Aorta (tissue), 5 donors: ENCODE measurements at regions of chr7 and their contacts with region 1.

Region 1: DNA sequence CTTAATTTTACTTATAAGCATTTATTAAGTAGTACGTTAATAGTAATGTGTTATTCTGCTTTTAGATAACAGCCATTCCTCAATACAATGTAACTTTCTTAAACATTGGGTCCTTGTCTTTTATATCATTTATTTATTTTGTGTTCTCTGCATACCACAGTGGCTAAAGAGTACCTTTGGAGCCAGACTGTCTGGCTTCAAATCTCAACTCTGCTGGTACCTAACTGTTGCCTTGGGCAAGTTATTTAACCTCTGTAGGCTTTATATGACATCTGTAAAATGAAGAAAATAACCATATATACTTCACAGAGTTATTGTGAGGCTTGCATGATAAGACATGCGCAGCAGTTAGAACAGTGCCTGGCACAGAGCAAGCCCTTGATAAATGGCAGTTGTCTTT is 397.6 kb downstream of the MDFIC start:
- DNase-seq: no peak
- ATAC-seq: no peak
- H3K4me3 ChIP-seq: no peak overlapping the region
- H3K27ac ChIP-seq: no peak overlapping the region
- H3K4me1 ChIP-seq: no peaks in the 10 kb centered on the region
- H3K27me3 ChIP-seq: no peaks in the 10 kb centered on the region

Region 2: GRCh38 chr7:115229401-115230105 is 90.0 kb before region 1 on chr7:
- intact Hi-C with region 1: loop called in 1 of 2 experiments (anchors 10 kb)
- DNase-seq: no peak
- ATAC-seq: no peak
- H3K4me3 ChIP-seq: no peak overlapping the region
- H3K27ac ChIP-seq: no peak overlapping the region
- H3K4me1 ChIP-seq: no peaks in the 10 kb centered on the region
- H3K27me3 ChIP-seq: no peaks in the 10 kb centered on the region

Region 3: GRCh38 chr7:115267503-115267902 is 52.0 kb before region 1 on chr7:
- intact Hi-C with region 1: no loop called
- DNase-seq: no peak
- ATAC-seq: no peak
- H3K4me3 ChIP-seq: no peak overlapping the region
- H3K27ac ChIP-seq: no peak overlapping the region
- H3K4me1 ChIP-seq: peaks cover 0 to 3% of the 10 kb centered on the region in 2 donors
- H3K27me3 ChIP-seq: no peaks in the 10 kb centered on the region

Region 4: GRCh38 chr7:115369008-115369407 is 49.5 kb after region 1 on chr7:
- intact Hi-C with region 1: no loop called
- DNase-seq: no peak
- ATAC-seq: no peak
- H3K4me3 ChIP-seq: no peak overlapping the region
- H3K27ac ChIP-seq: no peak overlapping the region
- H3K4me1 ChIP-seq: no peaks in the 10 kb centered on the region
- H3K27me3 ChIP-seq: no peaks in the 10 kb centered on the region